Vagina (tissue), 2 donors: ENCODE measurements at regions of chr9 and their contacts with region 1.

Region 1: GRCh38 chr9:121463026-121463807 is 36.4 kb downstream of the GGTA1 start:
- DNase-seq: no peak
- H3K4me3 ChIP-seq: no peak overlapping the region
- H3K27ac ChIP-seq: no peak overlapping the region
- H3K4me1 ChIP-seq: peaks cover 17% of the 10 kb centered on the region
- H3K27me3 ChIP-seq: no peaks in the 10 kb centered on the region
- CTCF ChIP-seq: peak in 1 of 3 experiments; percentile 14
- POLR2A ChIP-seq: no peak

Region 2: DNA sequence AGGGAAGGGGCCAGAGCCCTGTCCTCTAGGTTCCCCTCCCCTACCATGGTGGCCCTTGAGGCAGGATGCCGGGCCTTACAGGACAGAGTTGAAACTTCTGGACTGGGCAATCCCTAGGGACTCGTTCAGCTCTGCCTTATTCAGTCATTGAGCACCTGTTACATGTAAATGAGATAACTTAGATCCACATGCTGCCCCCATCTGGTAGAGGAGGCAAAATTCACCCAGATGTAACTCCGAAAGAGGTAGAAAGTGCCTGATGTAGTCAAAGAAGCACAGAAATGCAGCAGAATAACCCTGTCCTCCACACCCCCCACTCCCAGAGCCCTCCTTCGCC is 34.9 kb after region 1 on chr9:
- intact Hi-C with region 1: loop called (anchors 2 kb)
- DNase-seq: no peak
- H3K4me3 ChIP-seq: peak overlapping the region; percentile 59 to 61
- H3K27ac ChIP-seq: peak overlapping the region; percentile 90
- H3K4me1 ChIP-seq: peaks cover 34% of the 10 kb centered on the region
- H3K27me3 ChIP-seq: no peaks in the 10 kb centered on the region
- CTCF ChIP-seq: peak; percentile 46 to 57 (median 49)
- POLR2A ChIP-seq: no peak